HepG2 (cell line): ENCODE measurements at regions of chr16 and their contacts with region 1.

Region 1: GRCh38 chr16:11283820-11284248 is 2.7 kb upstream of the PRM1 start:
- DNase-seq: peak; percentile 69
- ATAC-seq: peak; percentile 45
- H3K4me3 ChIP-seq: no peak overlapping the region
- H3K27ac ChIP-seq: peak overlapping the region; percentile 52
- H3K4me1 ChIP-seq: peaks cover 91% of the 10 kb centered on the region
- H3K27me3 ChIP-seq: no peaks in the 10 kb centered on the region
- CTCF ChIP-seq: peak; percentile 45
- EP300 ChIP-seq: peak in 1 of 2 experiments; percentile 45; a peak in 1 of 4 replicates
- POLR2A ChIP-seq: no peak
- RAD21 ChIP-seq: peak; percentile 40; the same call in 1 of the 2 replicates

Region 2: GRCh38 chr16:11224096-11224893 is 59.5 kb before region 1 on chr16:
- CTCF ChIA-PET with region 1: no interaction called
- POLR2A ChIA-PET with region 1: no interaction called
- in situ Hi-C with region 1: no loop called
- intact Hi-C with region 1: no loop called
- DNase-seq: peak; percentile 55
- ATAC-seq: peak; percentile 96
- H3K4me3 ChIP-seq: peak overlapping the region in 1 of 3 experiments; percentile 39; a peak in 1 of 6 replicates
- H3K27ac ChIP-seq: no peak overlapping the region
- H3K4me1 ChIP-seq: peaks cover 19% of the 10 kb centered on the region
- H3K27me3 ChIP-seq: peaks cover 5 to 25% of the 10 kb centered on the region in 2 experiments; a peak in 3 of 5 replicates
- CTCF ChIP-seq: no peak
- EP300 ChIP-seq: 0 out of 4 replicates have a peak, but pooled peaks of 1 of the 2 experiments have one; percentile 11
- POLR2A ChIP-seq: no peak
- RAD21 ChIP-seq: no peak

Region 3: DNA sequence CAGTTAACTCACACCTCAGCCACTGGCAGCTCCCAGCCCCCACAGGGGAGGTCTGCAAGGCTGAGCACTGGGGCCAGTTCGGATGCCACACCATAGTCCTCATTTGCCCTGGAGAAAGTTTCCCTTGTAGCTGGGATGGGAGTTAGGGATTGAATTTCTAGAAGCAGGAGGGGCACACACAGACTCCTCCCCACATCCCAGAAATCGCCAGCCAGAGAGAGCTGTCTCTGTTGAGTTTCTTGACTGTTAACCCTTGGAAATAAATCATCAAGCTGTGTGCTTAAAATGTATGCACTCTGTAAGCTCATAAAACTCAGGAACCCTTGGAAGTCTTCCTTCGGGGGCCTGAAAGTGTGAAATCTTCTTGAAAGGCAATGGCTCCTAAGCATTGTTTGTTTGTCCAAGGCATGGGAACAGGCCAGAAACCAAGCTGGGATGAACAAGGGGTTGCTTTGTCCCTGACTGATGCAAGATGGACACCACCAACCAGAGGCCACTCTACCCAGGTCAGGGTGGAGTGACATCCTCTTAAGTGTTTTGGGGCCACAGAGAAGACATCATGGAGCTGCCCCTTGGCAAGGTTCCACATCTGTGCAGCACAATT is 10.0 kb before region 1 on chr16:
- CTCF ChIA-PET with region 1: no interaction called
- POLR2A ChIA-PET with region 1: interaction called, 21 read pairs
- in situ Hi-C with region 1: no loop called
- intact Hi-C with region 1: no loop called
- DNase-seq: peak; percentile 91
- ATAC-seq: peak; percentile 60
- H3K4me3 ChIP-seq: no peak overlapping the region
- H3K27ac ChIP-seq: peak overlapping the region; percentile 81
- H3K4me1 ChIP-seq: peaks cover 92% of the 10 kb centered on the region
- H3K27me3 ChIP-seq: no peaks in the 10 kb centered on the region
- CTCF ChIP-seq: no peak
- EP300 ChIP-seq: peak; percentile 11 to 68; a peak in 2 of 4 replicates
- POLR2A ChIP-seq: peak in 1 of 2 experiments; percentile 27; a peak in 1 of 4 replicates
- RAD21 ChIP-seq: 0 out of 2 replicates have a peak, but pooled peaks have one; percentile 22

Region 4: GRCh38 chr16:11297492-11298142 is 13.8 kb after region 1 on chr16:
- CTCF ChIA-PET with region 1: no interaction called
- POLR2A ChIA-PET with region 1: interaction called, 76 read pairs
- in situ Hi-C with region 1: no loop called
- intact Hi-C with region 1: loop called (anchors 2 kb)
- DNase-seq: peak; percentile 67
- ATAC-seq: peak; percentile 71
- H3K4me3 ChIP-seq: peak overlapping the region; percentile 15 to 67 (median 41)
- H3K27ac ChIP-seq: peak overlapping the region; percentile 68
- H3K4me1 ChIP-seq: peaks cover 97% of the 10 kb centered on the region
- H3K27me3 ChIP-seq: no peaks in the 10 kb centered on the region
- CTCF ChIP-seq: peak; percentile 47
- EP300 ChIP-seq: peak in 1 of 2 experiments; percentile 31; a peak in 1 of 4 replicates
- POLR2A ChIP-seq: 0 out of 4 replicates have a peak, but pooled peaks have one; percentile 31 to 50
- RAD21 ChIP-seq: peak; percentile 39; the same call in 1 of the 2 replicates

Region 5: DNA sequence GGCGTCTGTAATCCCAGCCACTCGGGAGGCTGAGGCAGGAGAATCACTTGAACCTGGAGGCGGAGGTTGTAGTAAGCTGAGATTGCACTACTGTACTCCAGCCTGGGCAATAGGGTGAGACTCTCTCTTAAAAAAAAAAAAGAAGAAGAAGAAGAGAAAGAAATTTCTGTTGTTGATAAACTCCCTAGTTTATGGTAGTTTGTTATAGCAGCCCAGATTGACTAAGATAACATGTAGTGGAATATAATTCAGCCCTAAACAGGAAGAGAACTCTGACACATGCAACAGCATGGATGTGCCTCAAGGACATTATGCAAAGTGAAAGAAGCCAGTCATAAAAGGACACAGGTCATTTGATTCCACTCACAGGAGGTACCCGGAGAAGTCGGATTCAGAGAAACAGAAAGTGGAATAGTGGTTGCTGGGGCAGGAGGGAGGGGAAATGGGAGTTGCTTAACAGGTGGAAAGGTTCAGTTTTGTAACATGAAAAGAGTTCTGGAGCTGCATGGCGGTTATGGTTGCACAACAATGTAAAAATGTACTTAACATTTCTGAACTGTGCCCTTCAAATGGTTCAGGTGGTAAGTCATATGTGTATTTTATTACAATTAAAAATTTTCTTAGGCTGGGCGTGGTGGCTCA is 23.3 kb after region 1 on chr16:
- CTCF ChIA-PET with region 1: no interaction called
- POLR2A ChIA-PET with region 1: interaction called, 45 read pairs
- in situ Hi-C with region 1: no loop called
- intact Hi-C with region 1: loop called (anchors 2 kb)
- DNase-seq: peak; percentile 98
- ATAC-seq: peak; percentile 53
- H3K4me3 ChIP-seq: 0 out of 6 replicates have a peak overlapping the region, but pooled peaks of 1 of the 3 experiments have one; percentile 20
- H3K27ac ChIP-seq: peak overlapping the region; percentile 89
- H3K4me1 ChIP-seq: peaks cover 84% of the 10 kb centered on the region
- H3K27me3 ChIP-seq: no peaks in the 10 kb centered on the region
- CTCF ChIP-seq: no peak
- EP300 ChIP-seq: peak; percentile 94
- POLR2A ChIP-seq: no peak
- RAD21 ChIP-seq: peak; percentile 29; the same call in 1 of the 2 replicates

Region 6: GRCh38 chr16:11312718-11313492 is 29.1 kb after region 1 on chr16:
- CTCF ChIA-PET with region 1: interaction called, 4 read pairs
- POLR2A ChIA-PET with region 1: interaction called, 45 read pairs
- in situ Hi-C with region 1: no loop called
- intact Hi-C with region 1: no loop called
- DNase-seq: peak; percentile 72
- ATAC-seq: no peak
- H3K4me3 ChIP-seq: peak overlapping the region; percentile 4 to 49 (median 34); a peak in 4 of 6 replicates
- H3K27ac ChIP-seq: peak overlapping the region; percentile 88
- H3K4me1 ChIP-seq: peaks cover 73% of the 10 kb centered on the region
- H3K27me3 ChIP-seq: no peaks in the 10 kb centered on the region
- CTCF ChIP-seq: no peak; the same call in 1 of the 2 replicates
- EP300 ChIP-seq: 0 out of 4 replicates have a peak, but pooled peaks of 1 of the 2 experiments have one; percentile 18
- POLR2A ChIP-seq: peak; percentile 11 to 46
- RAD21 ChIP-seq: no peak

Region 7: DNA sequence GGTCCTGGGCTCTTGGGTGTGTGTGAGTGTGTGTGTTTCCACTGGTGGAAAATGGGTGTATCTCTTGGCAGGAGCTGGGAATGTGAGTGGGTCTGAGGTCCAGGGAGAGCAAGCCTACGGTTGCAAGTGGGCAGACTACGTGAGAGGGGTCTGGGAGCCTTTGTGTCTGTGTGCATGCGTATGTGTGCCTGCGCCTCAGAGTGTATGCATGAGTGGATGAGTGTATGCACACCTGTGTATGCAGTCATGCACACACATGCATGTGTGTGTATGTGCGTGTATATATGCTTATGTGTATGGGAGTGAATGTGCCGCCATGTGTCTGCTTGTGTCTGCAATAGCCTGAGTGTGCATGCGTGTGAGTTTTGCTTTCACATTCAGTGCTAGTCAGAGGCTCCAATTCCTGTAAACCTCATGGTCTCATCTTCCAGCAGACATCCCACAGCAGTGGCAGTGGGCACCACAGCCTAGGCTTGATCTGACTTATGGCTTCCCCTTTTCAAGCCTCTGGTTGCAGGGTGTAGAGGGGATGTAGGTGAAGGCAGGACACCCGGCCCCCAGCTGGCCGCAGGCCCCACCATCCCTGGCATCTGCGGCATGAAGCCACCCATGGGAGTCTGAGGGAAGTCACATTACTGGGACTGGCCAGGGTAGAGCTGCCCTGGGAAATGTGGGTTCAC is 41.7 kb after region 1 on chr16:
- CTCF ChIA-PET with region 1: no interaction called
- POLR2A ChIA-PET with region 1: no interaction called
- in situ Hi-C with region 1: no loop called
- intact Hi-C with region 1: no loop called
- DNase-seq: no peak
- ATAC-seq: peak; percentile 12; the same call in 2 of the 3 replicates
- H3K4me3 ChIP-seq: no peak overlapping the region
- H3K27ac ChIP-seq: no peak overlapping the region
- H3K4me1 ChIP-seq: peaks cover 45% of the 10 kb centered on the region
- H3K27me3 ChIP-seq: no peaks in the 10 kb centered on the region
- CTCF ChIP-seq: no peak
- EP300 ChIP-seq: no peak
- POLR2A ChIP-seq: no peak
- RAD21 ChIP-seq: no peak

Region 8: DNA sequence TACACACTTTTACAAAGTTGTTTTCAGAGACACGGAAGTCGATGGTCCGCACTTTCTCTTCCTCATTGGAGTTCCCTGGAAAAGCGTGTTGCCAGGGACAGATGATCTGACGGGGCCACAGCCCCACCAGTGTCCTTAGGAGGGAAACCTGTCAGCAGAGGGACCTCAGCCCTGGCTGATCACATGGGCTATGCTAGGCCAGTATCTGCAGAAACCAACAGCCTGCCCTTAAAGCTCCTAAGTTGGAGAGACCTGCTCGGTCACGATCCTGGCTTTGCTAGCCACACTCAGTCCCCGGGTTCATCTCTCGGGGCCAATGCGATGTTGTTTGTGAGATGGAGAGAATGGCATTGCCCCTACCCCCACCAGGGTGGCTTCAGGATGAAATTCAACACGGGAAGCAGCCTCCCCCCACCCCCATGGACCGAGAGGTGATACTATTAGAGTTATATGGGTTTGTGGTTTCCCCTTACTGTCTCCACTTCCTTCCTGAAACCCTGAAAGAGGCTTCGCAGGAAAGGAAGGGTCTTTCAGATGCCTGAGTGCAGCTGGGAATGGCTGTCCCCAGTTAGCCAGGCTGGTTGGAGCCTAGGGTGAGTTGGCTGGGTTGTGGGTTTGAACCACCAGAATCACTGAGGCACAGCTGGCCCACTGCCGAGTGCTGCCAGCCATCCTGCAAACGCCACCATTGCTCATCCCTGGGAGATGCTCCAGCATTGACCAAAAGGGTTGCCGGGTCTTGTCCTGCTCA is 78.0 kb after region 1 on chr16:
- CTCF ChIA-PET with region 1: no interaction called
- POLR2A ChIA-PET with region 1: interaction called, 9 read pairs
- in situ Hi-C with region 1: no loop called
- intact Hi-C with region 1: loop called (anchors 1 kb)
- DNase-seq: no peak
- ATAC-seq: no peak
- H3K4me3 ChIP-seq: no peak overlapping the region
- H3K27ac ChIP-seq: no peak overlapping the region
- H3K4me1 ChIP-seq: peaks cover 88% of the 10 kb centered on the region
- H3K27me3 ChIP-seq: no peaks in the 10 kb centered on the region
- CTCF ChIP-seq: no peak
- EP300 ChIP-seq: no peak
- POLR2A ChIP-seq: no peak
- RAD21 ChIP-seq: no peak

Region 9: GRCh38 chr16:11423315-11424117 is 139.7 kb after region 1 on chr16:
- CTCF ChIA-PET with region 1: no interaction called
- POLR2A ChIA-PET with region 1: no interaction called
- in situ Hi-C with region 1: no loop called
- intact Hi-C with region 1: no loop called
- DNase-seq: no peak
- ATAC-seq: peak; percentile 50
- H3K4me3 ChIP-seq: no peak overlapping the region
- H3K27ac ChIP-seq: no peak overlapping the region
- H3K4me1 ChIP-seq: peaks cover 14% of the 10 kb centered on the region
- H3K27me3 ChIP-seq: peaks cover 11 to 42% of the 10 kb centered on the region in 2 experiments; a peak in 4 of 5 replicates
- CTCF ChIP-seq: no peak
- EP300 ChIP-seq: no peak
- POLR2A ChIP-seq: no peak
- RAD21 ChIP-seq: no peak